Activated CD4-positive, alpha-beta T cell treated with anti-CD3 and anti-CD28 coated beads, Interleukin-2, amount 10 ng/mL, durations not matched to agents 24 days and 14 days (primary cell): ENCODE measurements at regions of chr14 and their contacts with region 1.

Region 1: GRCh38 chr14:64438181-64438841 is 27.0 kb upstream of the AKAP5 start:
- DNase-seq: no peak
- H3K4me3 Mint-ChIP-seq: no peak overlapping the region
- H3K27ac Mint-ChIP-seq: peak overlapping the region; percentile 31
- H3K4me1 Mint-ChIP-seq: peaks cover 16% of the 10 kb centered on the region
- H3K27me3 Mint-ChIP-seq: no peaks in the 10 kb centered on the region

Region 2: GRCh38 chr14:64387694-64388532 is 50.4 kb before region 1 on chr14 and contains the start of gene MTHFD1:
- intact Hi-C with region 1: loop called (anchors 5 kb)
- DNase-seq: peak; percentile 99
- H3K4me3 Mint-ChIP-seq: peak within 1 kb of the TSS; percentile 99
- H3K27ac Mint-ChIP-seq: peak within 1 kb of the TSS; percentile 94
- H3K4me1 Mint-ChIP-seq: peaks cover 40% of the 10 kb centered on the region
- H3K27me3 Mint-ChIP-seq: peaks cover 2% of the 10 kb centered on the region
- total RNA-seq, gene MTHFD1: 246 and 249 TPM in 2 replicates

Region 3: DNA sequence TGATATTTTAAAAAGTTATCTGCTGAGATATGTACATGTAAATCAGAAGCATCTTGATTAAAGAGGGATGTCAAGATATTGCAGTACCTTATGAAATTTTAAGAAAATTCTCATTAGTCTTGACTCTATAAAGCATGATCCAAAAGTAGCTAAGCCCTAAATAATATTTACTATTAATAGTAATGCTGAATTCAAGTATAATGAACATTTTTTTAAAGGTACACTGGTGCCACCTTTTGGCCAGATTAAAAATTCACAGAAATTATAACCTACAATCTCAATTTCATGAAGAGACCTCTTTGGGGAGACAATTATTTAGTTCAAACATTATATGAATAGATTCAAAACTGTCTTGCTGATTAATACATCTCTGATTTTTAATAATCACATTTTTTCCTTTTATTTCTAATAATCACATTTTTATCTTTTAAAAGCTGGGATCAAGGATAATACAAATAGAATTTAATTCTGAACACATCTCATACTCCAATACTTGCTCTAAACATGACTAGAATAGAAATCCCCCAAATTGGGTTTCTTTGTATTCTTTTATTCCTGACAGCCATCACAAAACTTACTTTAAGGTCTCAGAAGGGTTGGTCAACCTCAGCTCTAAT is 40.4 kb after region 1 on chr14:
- intact Hi-C with region 1: loop called (anchors 5 kb)
- DNase-seq: peak; percentile 61
- H3K4me3 Mint-ChIP-seq: no peak overlapping the region
- H3K27ac Mint-ChIP-seq: no peak overlapping the region
- H3K4me1 Mint-ChIP-seq: peaks cover 7% of the 10 kb centered on the region
- H3K27me3 Mint-ChIP-seq: no peaks in the 10 kb centered on the region

Region 4: DNA sequence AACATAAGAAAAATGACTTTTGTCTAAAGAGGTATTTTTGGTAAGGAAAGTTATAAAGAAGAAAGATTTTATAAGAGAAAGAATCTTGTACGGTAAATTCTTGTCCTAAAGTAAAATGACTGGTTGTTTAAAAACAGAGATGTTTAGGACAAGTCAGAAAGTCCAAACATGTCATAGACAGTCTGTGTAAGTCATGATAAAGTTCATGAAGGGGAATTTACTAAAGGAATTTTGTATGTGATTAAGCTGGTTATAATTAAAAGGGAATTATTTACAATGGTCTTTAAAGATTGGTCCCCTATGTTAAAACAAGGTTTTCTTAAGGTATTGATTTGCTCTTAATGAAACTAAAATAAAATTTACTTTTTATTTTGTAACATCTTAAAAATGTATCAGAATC is 1778.5 kb after region 1 on chr14:
- intact Hi-C with region 1: no loop called
- DNase-seq: no peak
- H3K4me3 Mint-ChIP-seq: no peak overlapping the region
- H3K27ac Mint-ChIP-seq: no peak overlapping the region
- H3K4me1 Mint-ChIP-seq: no peaks in the 10 kb centered on the region
- H3K27me3 Mint-ChIP-seq: no peaks in the 10 kb centered on the region